WTC11 (cell line): ENCODE measurements at regions of chr10 and their contacts with region 1.

Region 1: GRCh38 chr10:23293145-23293724 is 51.4 kb downstream of the C10orf67 start:
- DNase-seq: peak; percentile 69
- ATAC-seq: peak; percentile 97
- H3K4me3 Mint-ChIP-seq: no peak overlapping the region
- H3K27ac Mint-ChIP-seq: no peak overlapping the region
- H3K4me1 Mint-ChIP-seq: peaks cover 2% of the 10 kb centered on the region
- H3K27me3 Mint-ChIP-seq: no peaks in the 10 kb centered on the region
- CTCF ChIP-seq: peak; percentile 40

Region 2: GRCh38 chr10:23204773-23205172 is 88.5 kb before region 1 on chr10:
- CTCF ChIA-PET with region 1: interaction called, 12 read pairs
- POLR2A ChIA-PET with region 1: no interaction called
- DNase-seq: peak; percentile 36
- ATAC-seq: peak; percentile 74
- H3K4me3 Mint-ChIP-seq: peak overlapping the region; percentile 30; the same call in 1 of the 2 replicates
- H3K27ac Mint-ChIP-seq: no peak overlapping the region
- H3K4me1 Mint-ChIP-seq: peaks cover 35% of the 10 kb centered on the region
- H3K27me3 Mint-ChIP-seq: peaks cover 67% of the 10 kb centered on the region
- CTCF ChIP-seq: no peak

Region 3: DNA sequence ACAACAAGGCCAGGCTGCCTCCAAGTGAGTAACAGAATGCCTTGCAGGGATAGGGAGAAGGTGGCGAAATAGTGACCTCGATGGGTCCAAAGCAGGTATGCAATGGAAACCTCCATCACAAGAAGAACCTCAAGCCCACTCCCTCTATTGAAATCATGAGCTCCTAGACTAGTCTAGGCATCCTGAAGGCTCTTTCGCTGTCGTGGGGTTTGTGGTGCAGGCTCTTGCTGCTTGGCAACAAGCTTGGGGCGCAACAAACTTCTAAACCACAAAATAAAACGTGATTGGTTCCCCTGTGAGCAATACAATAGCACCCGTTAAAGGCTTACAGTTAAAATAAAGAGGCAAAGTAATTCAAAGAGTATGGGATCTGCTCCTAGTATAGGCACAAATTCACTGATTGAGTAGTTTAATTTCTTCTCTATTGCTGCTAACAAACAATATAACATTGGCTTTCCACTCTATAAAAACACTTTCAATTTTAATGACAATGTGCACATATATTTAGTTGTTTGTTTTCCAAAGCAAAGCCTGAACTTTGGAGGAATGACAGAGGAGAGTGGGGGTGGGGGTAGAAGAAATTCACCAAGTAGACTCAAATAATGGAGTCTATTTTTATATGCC is 12.7 kb before region 1 on chr10:
- CTCF ChIA-PET with region 1: interaction called, 29 read pairs
- POLR2A ChIA-PET with region 1: no interaction called
- DNase-seq: peak; percentile 38
- ATAC-seq: peak; percentile 88
- H3K4me3 Mint-ChIP-seq: peak overlapping the region; percentile 42
- H3K27ac Mint-ChIP-seq: peak overlapping the region; percentile 70
- H3K4me1 Mint-ChIP-seq: peaks cover 25% of the 10 kb centered on the region
- H3K27me3 Mint-ChIP-seq: no peaks in the 10 kb centered on the region; the same call in 1 of the 2 replicates
- CTCF ChIP-seq: no peak

Region 4: DNA sequence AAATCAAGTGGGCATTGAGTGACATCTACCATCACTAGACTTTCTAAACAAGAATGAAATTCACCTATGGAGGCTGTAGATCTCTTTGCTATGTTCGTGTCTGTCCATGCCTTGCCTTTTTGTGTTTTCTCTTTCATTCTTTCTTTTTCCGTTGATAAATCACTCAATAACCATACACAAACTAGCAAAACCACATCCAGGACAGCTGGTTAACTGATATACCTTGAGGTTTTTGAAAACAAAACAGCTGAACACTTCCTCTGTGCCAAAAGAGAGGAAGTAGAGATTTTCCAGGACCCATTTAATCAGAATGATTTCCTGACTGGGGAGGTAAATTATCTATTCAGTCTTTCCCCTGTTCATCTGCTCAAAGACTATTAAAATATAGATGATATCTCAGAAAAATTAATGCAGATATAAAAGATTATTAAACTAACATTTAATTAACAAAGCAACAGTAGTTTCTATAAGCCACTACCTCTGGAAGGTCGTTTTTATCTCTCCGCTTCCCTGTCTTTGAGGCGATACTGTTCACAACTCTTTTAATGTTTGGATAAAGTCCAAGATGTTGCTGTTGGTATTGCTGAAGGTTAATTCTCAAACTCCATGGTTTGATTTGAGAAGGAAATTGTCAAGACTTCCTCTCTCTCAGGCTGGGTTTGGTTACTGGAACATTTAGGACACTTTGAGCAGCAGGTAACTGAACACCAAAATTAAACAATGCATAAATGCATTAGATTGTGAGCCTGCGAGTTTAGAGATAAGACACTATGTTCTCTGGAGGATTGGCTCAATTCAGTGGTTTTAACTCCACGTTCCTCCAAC is 75.8 kb after region 1 on chr10:
- CTCF ChIA-PET with region 1: no interaction called
- POLR2A ChIA-PET with region 1: no interaction called
- DNase-seq: no peak
- ATAC-seq: no peak
- H3K4me3 Mint-ChIP-seq: no peak overlapping the region
- H3K27ac Mint-ChIP-seq: no peak overlapping the region
- H3K4me1 Mint-ChIP-seq: peaks cover 9% of the 10 kb centered on the region
- H3K27me3 Mint-ChIP-seq: no peaks in the 10 kb centered on the region
- CTCF ChIP-seq: no peak